Ovary (tissue), 10 donors: ENCODE measurements at regions of chr15 and their contacts with region 1.

Region 1: GRCh38 chr15:49421991-49422390 is 1.1 kb upstream of the FGF7 start:
- DNase-seq: peak; percentile 39 to 73 (median 68)
- H3K4me3 ChIP-seq: peak overlapping the region; percentile 51
- H3K27ac ChIP-seq: peak overlapping the region in 1 of 2 donors; percentile 66
- H3K4me1 ChIP-seq: no peaks in the 10 kb centered on the region
- H3K27me3 ChIP-seq: no peaks in the 10 kb centered on the region
- CTCF ChIP-seq: peak; percentile 58 to 93 (median 73)
- EP300 ChIP-seq: no peak
- POLR2A ChIP-seq: no peak

Region 2: DNA sequence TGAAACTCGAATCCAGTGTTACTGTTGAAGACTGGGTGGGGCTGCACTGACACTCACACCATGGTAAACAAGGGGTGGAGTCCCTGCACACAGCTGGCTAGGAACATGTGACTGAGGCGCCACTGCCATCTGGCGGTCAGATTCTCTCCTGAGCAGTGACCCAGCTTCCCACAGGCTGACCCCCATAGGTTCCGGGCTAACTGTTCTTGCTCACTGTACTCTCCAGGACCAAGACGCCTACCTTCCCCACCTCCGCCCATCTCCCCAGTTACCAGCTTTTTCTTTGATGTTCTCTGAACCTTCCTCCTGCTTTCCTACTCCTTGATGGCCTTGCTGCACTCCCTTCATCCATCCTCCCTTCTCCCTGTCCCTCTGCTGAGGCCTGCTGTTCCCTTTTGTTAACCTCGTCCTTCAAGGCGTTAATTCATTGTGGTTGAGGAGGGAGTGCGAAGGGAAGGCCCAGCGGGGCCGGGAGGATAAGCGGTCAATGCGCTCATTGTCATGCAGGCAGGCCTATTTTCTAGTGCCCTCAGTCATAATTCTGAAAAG is 581.9 kb after region 1 on chr15:
- intact Hi-C with region 1: loop called in 1 of 4 experiments (anchors 10 kb)
- DNase-seq: peak; percentile 80 to 91 (median 89)
- H3K4me3 ChIP-seq: no peak overlapping the region
- H3K27ac ChIP-seq: no peak overlapping the region
- H3K4me1 ChIP-seq: no peaks in the 10 kb centered on the region
- H3K27me3 ChIP-seq: no peaks in the 10 kb centered on the region
- CTCF ChIP-seq: peak; percentile 35 to 79 (median 73)
- EP300 ChIP-seq: no peak
- POLR2A ChIP-seq: no peak